Dorsolateral prefrontal cortex (tissue), 120 donors: ENCODE measurements at regions of chr6 and their contacts with region 1.

Region 1: DNA sequence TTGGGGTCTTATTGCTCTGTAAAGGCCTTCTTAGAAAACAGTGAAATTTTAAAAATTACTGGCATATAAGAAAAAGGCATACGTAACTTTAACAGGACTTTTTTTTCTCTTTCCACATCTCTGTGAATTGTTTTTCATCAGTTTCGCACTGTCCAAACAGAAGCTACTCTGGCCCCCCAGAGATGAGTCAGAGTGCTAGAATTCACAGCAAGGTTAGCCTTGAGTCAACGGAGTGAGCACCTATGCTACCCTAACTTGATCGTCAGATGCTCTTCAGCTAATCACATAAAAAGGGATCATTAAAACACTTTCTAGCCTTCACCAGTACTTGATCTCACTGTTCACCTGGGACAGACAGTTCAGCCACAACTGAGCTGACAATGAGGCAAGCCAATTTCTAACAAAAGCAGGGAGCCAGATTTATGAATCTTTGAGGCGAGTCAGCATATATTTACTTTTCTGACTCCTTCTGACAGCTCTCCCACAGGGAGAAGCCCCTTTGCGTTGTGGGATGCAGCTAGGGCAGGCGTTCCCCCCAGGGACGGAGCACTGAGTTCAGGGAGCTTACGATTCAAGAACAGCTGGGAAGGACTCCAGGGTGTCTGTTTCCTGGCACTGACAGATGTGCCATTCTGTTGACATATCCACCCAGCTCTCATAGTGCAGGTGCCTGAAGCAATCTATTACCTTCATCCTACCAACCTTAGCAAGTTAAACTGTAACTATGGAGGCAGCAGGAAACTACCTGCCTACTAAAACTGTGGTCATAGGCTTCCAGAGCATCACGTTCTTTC is 46.4 kb upstream of the SPDEF start:
- DNase-seq: no peak
- H3K4me3 ChIP-seq: no peak overlapping the region
- H3K27ac ChIP-seq: peak overlapping the region in 11 of 59 donors; percentile 5 to 94 (median 22)
- H3K27me3 ChIP-seq: no peaks in the 10 kb centered on the region
- CTCF ChIP-seq: no peak

Region 2: DNA sequence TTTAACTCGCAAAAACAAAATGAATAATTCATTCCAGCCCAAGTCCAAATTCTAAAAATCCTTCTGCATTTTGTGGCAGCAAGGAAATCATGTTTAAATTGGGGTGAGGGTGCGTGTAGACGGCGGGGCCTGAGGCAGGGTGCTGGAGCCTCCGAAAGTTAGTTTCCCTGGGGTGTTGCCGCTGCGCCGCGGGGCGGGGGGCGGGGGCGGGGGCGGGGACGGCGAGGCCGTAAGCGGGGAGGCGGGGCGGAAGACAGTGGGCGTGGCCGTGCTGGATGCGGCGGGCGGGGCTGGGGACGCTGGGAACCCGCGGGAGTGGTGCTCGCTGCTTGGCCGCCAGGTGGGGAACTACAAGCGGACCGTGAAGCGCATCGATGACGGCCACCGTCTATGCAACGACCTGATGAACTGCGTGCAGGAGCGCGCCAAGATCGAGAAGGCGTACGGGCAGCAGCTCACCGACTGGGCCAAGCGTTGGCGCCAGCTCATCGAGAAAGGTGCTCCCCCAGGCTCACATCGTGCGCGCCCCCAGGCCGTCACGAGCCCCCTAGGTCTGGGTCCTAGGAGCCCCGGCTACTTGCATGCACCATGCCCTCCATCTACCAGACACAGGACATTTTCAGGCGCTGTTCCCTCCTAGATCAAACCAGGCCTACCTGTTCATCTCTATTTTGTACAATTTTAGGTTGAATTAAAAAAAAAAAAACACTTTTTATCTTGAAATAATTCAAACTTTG is 75.4 kb before region 1 on chr6:
- intact Hi-C with region 1: loop called in 1 of 2 experiments (anchors 5 kb)
- DNase-seq: peak; percentile 86 to 97 (median 90)
- H3K4me3 ChIP-seq: peak overlapping the region in 58 of 59 donors; percentile 8 to 62 (median 46)
- H3K27ac ChIP-seq: peak overlapping the region in 38 of 59 donors; percentile 1 to 71 (median 42)
- H3K27me3 ChIP-seq: no peaks in the 10 kb centered on the region
- CTCF ChIP-seq: peak in 54 of 56 donors; percentile 53 to 84 (median 72)

Region 3: DNA sequence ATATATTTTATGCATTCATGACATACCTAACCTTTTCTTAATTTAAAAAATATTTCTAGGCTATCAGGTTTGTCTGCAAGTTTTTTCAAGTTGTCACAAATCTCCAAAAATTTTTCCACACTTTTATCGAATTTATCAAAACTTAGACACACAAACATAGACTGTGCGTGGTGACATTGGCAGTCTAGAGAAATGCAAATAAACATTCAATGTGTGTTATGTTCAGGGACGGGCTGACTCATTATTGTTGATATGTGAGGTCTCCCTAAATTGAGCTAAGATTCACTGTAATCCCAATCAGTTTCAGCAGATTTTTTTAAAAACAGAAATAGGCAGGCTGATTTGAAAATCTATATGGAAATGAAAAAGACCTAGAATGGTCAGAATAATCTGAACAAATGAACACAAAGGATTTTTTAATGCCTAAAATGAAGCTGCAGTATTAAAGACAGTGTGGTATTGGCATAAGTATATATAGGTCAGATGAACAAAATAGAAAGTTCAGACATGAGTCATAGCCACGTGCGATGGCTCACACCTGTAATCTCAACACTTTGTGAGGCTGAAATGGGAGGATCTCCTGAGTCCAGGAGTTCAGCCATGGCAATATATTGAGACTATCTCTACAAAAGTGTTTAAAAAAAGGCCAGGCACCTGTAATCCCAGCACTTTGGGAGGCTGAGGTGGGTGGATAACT is 208.6 kb after region 1 on chr6:
- intact Hi-C with region 1: no loop called
- DNase-seq: no peak
- H3K4me3 ChIP-seq: no peak overlapping the region
- H3K27ac ChIP-seq: no peak overlapping the region
- H3K27me3 ChIP-seq: no peaks in the 10 kb centered on the region
- CTCF ChIP-seq: no peak